Prostate gland (tissue), 2 donors: ENCODE measurements at regions of chr18 and their contacts with region 1.

Region 1: GRCh38 chr18:34643989-34644388 is 66.1 kb upstream of the DTNA start:
- DNase-seq: no peak
- H3K4me3 ChIP-seq: no peak overlapping the region
- H3K27ac ChIP-seq: no peak overlapping the region
- H3K4me1 ChIP-seq: no peaks in the 10 kb centered on the region
- H3K27me3 ChIP-seq: no peaks in the 10 kb centered on the region
- CTCF ChIP-seq: no peak
- POLR2A ChIP-seq: no peak

Region 2: GRCh38 chr18:34342960-34343359 is 301.0 kb before region 1 on chr18:
- intact Hi-C with region 1: no loop called
- DNase-seq: no peak
- H3K4me3 ChIP-seq: no peak overlapping the region
- H3K27ac ChIP-seq: no peak overlapping the region
- H3K4me1 ChIP-seq: no peaks in the 10 kb centered on the region
- H3K27me3 ChIP-seq: no peaks in the 10 kb centered on the region
- CTCF ChIP-seq: no peak
- POLR2A ChIP-seq: no peak

Region 3: GRCh38 chr18:34600118-34600517 is 43.9 kb before region 1 on chr18:
- intact Hi-C with region 1: loop called (anchors 5 kb)
- DNase-seq: no peak
- H3K4me3 ChIP-seq: no peak overlapping the region
- H3K27ac ChIP-seq: no peak overlapping the region
- H3K4me1 ChIP-seq: no peaks in the 10 kb centered on the region
- H3K27me3 ChIP-seq: no peaks in the 10 kb centered on the region
- CTCF ChIP-seq: no peak
- POLR2A ChIP-seq: no peak